ENCODE measurements at regions of chr2 and their contacts with region 1.

Region 1: GRCh38 chr2:123826729-123827271 is 198.3 kb upstream of the CNTNAP5 start:
- DNase-seq: no peak
- H3K4me3 ChIP-seq: no peak overlapping the region
- H3K27ac ChIP-seq: no peak overlapping the region
- H3K4me1 ChIP-seq: no peaks in the 10 kb centered on the region
- H3K27me3 ChIP-seq: no peaks in the 10 kb centered on the region
- CTCF ChIP-seq: no peak
- EP300 ChIP-seq: no peak
- POLR2A ChIP-seq: no peak

Region 2: DNA sequence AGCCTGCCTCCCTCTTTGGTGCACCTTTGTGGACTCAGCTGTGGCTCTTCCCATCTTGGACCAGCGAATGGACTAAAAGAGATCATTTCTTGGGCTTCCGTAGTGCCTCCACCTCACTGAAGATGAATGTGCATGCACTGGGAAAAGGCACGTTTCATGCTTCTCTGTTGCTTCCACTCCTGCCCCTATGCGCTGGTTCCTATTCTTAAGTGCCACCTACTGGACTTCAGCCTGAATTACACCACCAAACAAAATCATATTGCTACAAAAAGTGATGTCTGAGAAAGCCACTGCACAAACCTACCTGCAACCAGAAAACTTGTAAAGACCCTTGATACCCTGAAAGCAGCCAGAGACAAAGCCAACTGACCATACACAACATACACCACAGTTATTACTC is 1375.8 kb before region 1 on chr2:
- in situ Hi-C with region 1: no loop called
- intact Hi-C with region 1: no loop called
- DNase-seq: no peak
- H3K4me3 ChIP-seq: no peak overlapping the region
- H3K27ac ChIP-seq: no peak overlapping the region
- H3K4me1 ChIP-seq: no peaks in the 10 kb centered on the region
- H3K27me3 ChIP-seq: no peaks in the 10 kb centered on the region
- CTCF ChIP-seq: peak; percentile 14 to 58 (median 46)
- EP300 ChIP-seq: no peak
- POLR2A ChIP-seq: no peak

Region 3: DNA sequence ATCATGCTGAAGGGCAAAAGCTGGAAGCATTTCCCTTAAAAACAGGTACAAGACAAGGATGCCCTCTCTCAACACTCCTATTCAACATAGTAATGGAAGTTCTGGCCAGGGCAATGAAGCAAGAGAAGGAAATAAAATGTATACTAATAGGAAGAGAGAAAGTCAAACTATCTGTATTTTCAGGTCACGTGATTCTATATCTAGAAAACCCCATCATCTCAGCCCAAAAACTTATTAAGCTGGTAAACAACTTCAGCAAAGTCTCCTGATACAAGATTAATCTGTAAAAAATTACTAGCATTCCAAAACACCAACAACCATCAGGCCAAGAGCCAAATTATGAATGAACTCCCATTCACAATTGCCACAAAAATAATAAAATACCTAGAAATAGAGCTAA is 15.0 kb before region 1 on chr2:
- in situ Hi-C with region 1: no loop called
- intact Hi-C with region 1: loop called (anchors 2 kb)
- DNase-seq: no peak
- H3K4me3 ChIP-seq: no peak overlapping the region
- H3K27ac ChIP-seq: no peak overlapping the region
- H3K4me1 ChIP-seq: no peaks in the 10 kb centered on the region
- H3K27me3 ChIP-seq: no peaks in the 10 kb centered on the region
- CTCF ChIP-seq: no peak
- EP300 ChIP-seq: no peak
- POLR2A ChIP-seq: no peak

Measured in transverse colon (tissue), 4 donors.